Gastrocnemius medialis (tissue), 4 donors: ENCODE measurements at regions of chr7 and their contacts with region 1.

Region 1: DNA sequence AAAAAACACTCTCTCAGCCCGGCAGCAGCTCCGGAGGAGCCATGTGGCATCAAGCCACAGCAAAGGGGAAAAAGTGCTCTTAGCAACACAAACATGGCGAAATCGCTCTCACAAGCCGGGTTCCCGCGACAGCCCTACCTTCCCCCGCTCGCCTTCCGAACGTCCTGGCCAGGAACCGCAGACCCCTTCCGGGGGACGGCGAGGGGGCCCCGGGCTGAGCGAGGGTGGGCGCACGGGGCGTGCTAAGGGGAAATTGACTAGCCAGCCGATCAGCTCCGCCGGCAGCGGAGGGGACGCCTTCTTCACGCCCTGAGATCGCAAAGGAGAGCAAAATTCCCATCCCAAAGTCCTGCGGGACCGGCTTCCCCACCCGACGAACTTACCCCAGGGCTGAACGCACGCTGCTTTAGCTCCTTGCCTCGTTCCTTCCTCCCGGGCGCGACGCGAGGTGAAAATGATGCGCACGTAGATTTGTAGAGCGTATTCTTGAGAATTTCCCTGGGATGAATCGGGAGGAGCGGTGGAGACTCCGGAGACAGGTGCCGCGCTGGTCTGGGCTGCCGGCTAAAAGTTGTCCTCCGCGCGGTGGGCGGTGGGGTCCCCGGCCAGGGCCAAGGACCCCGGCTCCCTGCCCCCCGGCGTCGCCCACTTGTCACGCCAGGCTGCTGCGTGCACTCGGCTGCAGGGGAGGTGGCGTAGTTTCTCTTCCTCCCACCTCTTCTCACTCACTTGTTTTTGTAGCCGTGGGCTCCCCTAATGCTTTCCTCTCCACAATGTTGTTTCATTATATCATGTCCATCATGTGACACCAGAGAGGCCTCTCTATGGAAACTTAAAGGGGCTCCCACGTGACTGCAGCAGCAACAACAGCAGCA is 220.1 kb upstream of the MKLN1 start:
- DNase-seq: peak; percentile 84 to 90
- ATAC-seq: peak; percentile 53 to 65
- H3K4me3 ChIP-seq: peak overlapping the region; percentile 78 to 97 (median 94)
- H3K27ac ChIP-seq: peak overlapping the region; percentile 95 to 100 (median 98)
- H3K4me1 ChIP-seq: peaks cover 31 to 35% of the 10 kb centered on the region in 2 donors
- H3K27me3 ChIP-seq: no peaks in the 10 kb centered on the region
- CTCF ChIP-seq: peak in 2 of 5 experiments; percentile 12 to 36
- POLR2A ChIP-seq: peak; percentile 86 to 99

Region 2: GRCh38 chr7:130941322-130942210 is 166.0 kb before region 1 on chr7:
- in situ Hi-C with region 1: no loop called
- intact Hi-C with region 1: loop called (anchors 5 kb)
- DNase-seq: peak; percentile 87 to 88
- ATAC-seq: peak; percentile 47 to 72
- H3K4me3 ChIP-seq: peak overlapping the region; percentile 61 to 81 (median 68)
- H3K27ac ChIP-seq: peak overlapping the region; percentile 91 to 97 (median 94)
- H3K4me1 ChIP-seq: peaks cover 35 to 74% of the 10 kb centered on the region in 2 donors
- H3K27me3 ChIP-seq: no peaks in the 10 kb centered on the region
- CTCF ChIP-seq: no peak
- POLR2A ChIP-seq: peak; percentile 60 to 90

Region 3: GRCh38 chr7:131042269-131043160 is 65.1 kb before region 1 on chr7:
- in situ Hi-C with region 1: no loop called
- intact Hi-C with region 1: no loop called
- DNase-seq: no peak
- ATAC-seq: no peak
- H3K4me3 ChIP-seq: no peak overlapping the region
- H3K27ac ChIP-seq: peak overlapping the region in 1 of 4 donors; percentile 64
- H3K4me1 ChIP-seq: peaks cover 58 to 66% of the 10 kb centered on the region in 2 donors
- H3K27me3 ChIP-seq: no peaks in the 10 kb centered on the region
- CTCF ChIP-seq: no peak
- POLR2A ChIP-seq: no peak

Region 4: GRCh38 chr7:131157530-131158243 is 50.1 kb after region 1 on chr7:
- in situ Hi-C with region 1: no loop called
- intact Hi-C with region 1: loop called (anchors 2 kb)
- DNase-seq: peak; percentile 91 to 94
- ATAC-seq: peak; percentile 92 to 96
- H3K4me3 ChIP-seq: peak overlapping the region; percentile 32 to 47 (median 36)
- H3K27ac ChIP-seq: peak overlapping the region; percentile 82 to 95 (median 86)
- H3K4me1 ChIP-seq: peaks cover 22 to 42% of the 10 kb centered on the region in 2 donors
- H3K27me3 ChIP-seq: no peaks in the 10 kb centered on the region
- CTCF ChIP-seq: peak in 1 of 5 experiments; percentile 23
- POLR2A ChIP-seq: peak in 1 of 2 donors; percentile 64

Region 5: GRCh38 chr7:131212114-131212513 is 104.5 kb after region 1 on chr7:
- in situ Hi-C with region 1: no loop called
- intact Hi-C with region 1: no loop called
- DNase-seq: no peak
- ATAC-seq: peak in 1 of 2 donors; percentile 33
- H3K4me3 ChIP-seq: no peak overlapping the region
- H3K27ac ChIP-seq: peak overlapping the region in 3 of 4 donors; percentile 31 to 65 (median 45)
- H3K4me1 ChIP-seq: peaks cover 0 to 16% of the 10 kb centered on the region in 2 donors
- H3K27me3 ChIP-seq: no peaks in the 10 kb centered on the region
- CTCF ChIP-seq: no peak
- POLR2A ChIP-seq: no peak

Region 6: DNA sequence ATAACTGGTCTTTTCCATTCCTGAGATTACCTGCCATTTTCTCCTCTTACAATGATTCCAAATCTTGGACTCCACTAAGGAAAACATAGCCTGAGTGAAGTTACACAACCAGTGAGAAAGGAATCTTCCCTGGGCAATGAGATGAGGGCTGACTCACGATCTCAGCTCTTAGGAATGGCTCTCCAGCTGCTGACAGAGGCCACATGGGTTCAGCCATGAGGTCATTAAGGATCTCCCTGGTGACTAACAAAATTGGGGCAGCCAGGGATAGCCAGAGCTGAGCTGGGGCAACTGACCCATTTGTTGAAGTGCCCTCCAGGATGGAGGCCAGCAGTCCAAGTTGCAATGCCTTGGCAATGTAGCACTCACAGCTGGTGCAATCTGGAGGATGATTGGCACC is 141.4 kb after region 1 on chr7:
- in situ Hi-C with region 1: no loop called
- intact Hi-C with region 1: loop called (anchors 1 kb)
- DNase-seq: peak; percentile 95 to 97
- ATAC-seq: peak; percentile 91 to 99
- H3K4me3 ChIP-seq: no peak overlapping the region
- H3K27ac ChIP-seq: peak overlapping the region; percentile 66 to 87 (median 72)
- H3K4me1 ChIP-seq: peaks cover 17 to 33% of the 10 kb centered on the region in 2 donors
- H3K27me3 ChIP-seq: no peaks in the 10 kb centered on the region
- CTCF ChIP-seq: no peak
- POLR2A ChIP-seq: peak in 1 of 2 donors; percentile 24

Region 7: GRCh38 chr7:131302876-131303707 is 195.5 kb after region 1 on chr7:
- in situ Hi-C with region 1: no loop called
- intact Hi-C with region 1: loop called (anchors 2 kb)
- DNase-seq: peak in 1 of 2 donors; percentile 45
- ATAC-seq: peak; percentile 16 to 53
- H3K4me3 ChIP-seq: no peak overlapping the region
- H3K27ac ChIP-seq: peak overlapping the region in 3 of 4 donors; percentile 40 to 71 (median 66)
- H3K4me1 ChIP-seq: peaks cover 39 to 50% of the 10 kb centered on the region in 2 donors
- H3K27me3 ChIP-seq: no peaks in the 10 kb centered on the region
- CTCF ChIP-seq: peak; percentile 44 to 72 (median 52)
- POLR2A ChIP-seq: no peak

Region 8: GRCh38 chr7:131424219-131424822 is 316.7 kb after region 1 on chr7:
- in situ Hi-C with region 1: no loop called
- intact Hi-C with region 1: loop called (anchors 10 kb)
- DNase-seq: no peak
- ATAC-seq: peak; percentile 53 to 62
- H3K4me3 ChIP-seq: no peak overlapping the region
- H3K27ac ChIP-seq: peak overlapping the region; percentile 32 to 58 (median 48)
- H3K4me1 ChIP-seq: peaks cover 25 to 35% of the 10 kb centered on the region in 2 donors
- H3K27me3 ChIP-seq: no peaks in the 10 kb centered on the region
- CTCF ChIP-seq: peak; percentile 31 to 55 (median 43)
- POLR2A ChIP-seq: no peak